ENCODE measurements at regions of chr21 and their contacts with region 1.

Region 1: GRCh38 chr21:45432575-45433255 is 27.8 kb downstream of the COL18A1 start:
- DNase-seq: no peak
- ATAC-seq: peak; percentile 41
- H3K4me3 ChIP-seq: no peak overlapping the region
- H3K27ac ChIP-seq: no peak overlapping the region
- H3K4me1 ChIP-seq: peaks cover 16 to 58% of the 10 kb centered on the region in 2 experiments; a peak in 4 of 5 replicates
- H3K27me3 ChIP-seq: no peaks in the 10 kb centered on the region; a peak in 1 of 5 replicates
- CTCF ChIP-seq: no peak
- EP300 ChIP-seq: no peak
- POLR2A ChIP-seq: no peak
- RAD21 ChIP-seq: no peak

Region 2: DNA sequence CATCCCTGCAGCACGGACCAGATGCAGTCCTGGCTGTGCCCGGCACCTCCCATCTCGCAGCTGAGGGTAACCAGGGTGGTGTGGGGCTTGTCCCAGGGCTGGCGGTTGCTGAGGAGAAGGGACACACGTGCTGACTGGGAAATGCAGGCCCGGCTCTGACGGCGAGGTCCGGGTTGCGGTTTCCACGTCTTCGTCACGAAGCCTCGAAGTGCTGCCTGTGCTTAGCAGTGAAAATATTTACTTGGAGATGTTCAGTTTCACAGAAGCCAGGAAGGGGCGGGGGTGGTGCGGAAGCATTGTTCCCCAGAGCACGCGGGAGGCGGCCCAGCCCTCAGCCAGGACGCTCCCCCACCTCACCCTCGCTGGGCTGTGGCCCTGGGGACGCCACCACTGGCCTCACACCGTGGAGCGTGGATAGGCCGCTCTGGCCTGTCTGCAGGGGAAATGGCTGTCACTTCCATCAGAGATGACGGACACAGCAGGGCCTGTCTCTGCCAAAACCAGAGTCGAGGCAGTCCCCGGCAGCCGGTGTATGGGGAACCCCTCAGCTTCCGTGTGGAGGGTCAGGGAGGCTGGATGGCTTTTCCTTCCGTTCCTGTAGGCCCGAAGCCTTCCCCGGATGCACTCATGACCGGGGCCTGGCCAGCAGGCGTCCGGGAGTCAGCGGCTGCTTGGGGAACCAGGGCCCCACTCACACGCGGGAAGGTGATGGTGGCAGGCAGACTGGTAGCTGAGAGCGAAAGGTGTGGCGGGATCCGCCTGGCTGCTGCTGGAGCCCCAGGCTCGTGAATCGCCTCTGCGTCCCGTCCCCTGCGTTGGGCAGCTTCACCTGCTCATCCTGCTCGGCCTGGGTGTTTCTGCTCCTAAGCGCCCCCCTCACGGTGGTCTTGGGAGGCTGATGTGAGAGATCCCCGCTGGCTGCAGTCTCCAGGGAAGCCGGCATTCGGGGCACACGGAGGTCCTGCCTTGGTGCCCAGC is 130.3 kb before region 1 on chr21:
- CTCF ChIA-PET with region 1: no interaction called
- POLR2A ChIA-PET with region 1: no interaction called
- in situ Hi-C with region 1: loop called (anchors 5 kb)
- intact Hi-C with region 1: no loop called
- DNase-seq: no peak
- ATAC-seq: no peak
- H3K4me3 ChIP-seq: no peak overlapping the region
- H3K27ac ChIP-seq: no peak overlapping the region
- H3K4me1 ChIP-seq: peaks cover 28 to 64% of the 10 kb centered on the region in 2 experiments
- H3K27me3 ChIP-seq: peaks cover 0 to 50% of the 10 kb centered on the region in 2 experiments; a peak in 2 of 5 replicates
- CTCF ChIP-seq: no peak
- EP300 ChIP-seq: no peak
- POLR2A ChIP-seq: no peak
- RAD21 ChIP-seq: no peak

Measured in K562 (cell line).